ENCODE measurements at regions of chr16 and their contacts with region 1.

Region 1: DNA sequence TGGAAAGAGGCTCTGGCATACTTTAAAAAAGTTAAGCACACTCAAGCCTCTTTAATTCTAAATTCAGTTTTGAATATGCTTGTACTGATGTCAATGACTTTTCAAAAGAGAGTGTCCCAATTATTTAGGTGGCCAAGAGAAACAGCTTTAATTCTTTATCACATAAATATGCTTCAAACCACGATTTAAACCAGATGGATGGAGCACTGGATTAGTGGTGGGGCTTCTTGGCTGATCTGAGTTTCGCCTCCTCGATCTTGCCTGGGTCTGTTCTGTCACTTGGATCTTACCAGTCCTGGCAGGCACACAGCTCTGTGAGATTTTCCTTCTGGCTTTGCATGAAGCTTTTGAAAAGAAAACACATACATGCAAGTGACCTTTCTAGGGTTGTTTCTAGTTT is 467.8 kb downstream of the MAF start:
- DNase-seq: no peak
- H3K4me3 ChIP-seq: no peak overlapping the region
- H3K4me3 Mint-ChIP-seq: no peak overlapping the region
- H3K27ac ChIP-seq: no peak overlapping the region
- H3K27ac Mint-ChIP-seq: no peak overlapping the region
- H3K4me1 ChIP-seq: peaks cover 16 to 18% of the 10 kb centered on the region in 2 donors
- H3K4me1 Mint-ChIP-seq: peaks cover 22% of the 10 kb centered on the region
- H3K27me3 ChIP-seq: no peaks in the 10 kb centered on the region
- H3K27me3 Mint-ChIP-seq: peaks cover 0 to 2% (median 0%) of the 10 kb centered on the region in 3 donors
- CTCF ChIP-seq: no peak

Region 2: DNA sequence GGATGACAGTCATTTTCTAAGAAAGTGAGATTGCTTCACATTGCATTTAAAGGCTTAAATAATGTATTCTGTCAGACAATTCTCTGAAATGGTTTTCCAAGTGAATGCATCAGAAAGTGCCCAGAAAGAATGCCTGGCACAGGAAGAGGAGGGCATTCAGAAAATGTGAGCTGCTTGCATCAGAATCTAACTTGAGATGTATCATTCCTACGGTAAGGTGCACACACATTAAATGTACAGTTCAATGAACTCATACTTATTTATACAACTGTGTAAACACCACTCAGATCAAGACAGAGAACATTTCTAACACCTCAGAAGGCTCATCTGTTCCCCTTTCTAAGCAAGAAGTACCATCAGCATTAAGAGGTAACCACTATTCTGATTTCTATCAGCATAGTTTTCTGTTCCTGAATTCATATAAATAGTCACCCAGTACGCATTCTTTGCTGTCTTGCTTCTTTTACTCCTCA is 170.2 kb before region 1 on chr16:
- intact Hi-C with region 1: no loop called
- DNase-seq: no peak
- H3K4me3 ChIP-seq: no peak overlapping the region
- H3K4me3 Mint-ChIP-seq: no peak overlapping the region
- H3K27ac ChIP-seq: no peak overlapping the region
- H3K27ac Mint-ChIP-seq: no peak overlapping the region
- H3K4me1 ChIP-seq: no peaks in the 10 kb centered on the region
- H3K4me1 Mint-ChIP-seq: no peaks in the 10 kb centered on the region
- H3K27me3 ChIP-seq: no peaks in the 10 kb centered on the region
- H3K27me3 Mint-ChIP-seq: peaks cover 0 to 2% (median 0%) of the 10 kb centered on the region in 3 donors
- CTCF ChIP-seq: no peak

Region 3: DNA sequence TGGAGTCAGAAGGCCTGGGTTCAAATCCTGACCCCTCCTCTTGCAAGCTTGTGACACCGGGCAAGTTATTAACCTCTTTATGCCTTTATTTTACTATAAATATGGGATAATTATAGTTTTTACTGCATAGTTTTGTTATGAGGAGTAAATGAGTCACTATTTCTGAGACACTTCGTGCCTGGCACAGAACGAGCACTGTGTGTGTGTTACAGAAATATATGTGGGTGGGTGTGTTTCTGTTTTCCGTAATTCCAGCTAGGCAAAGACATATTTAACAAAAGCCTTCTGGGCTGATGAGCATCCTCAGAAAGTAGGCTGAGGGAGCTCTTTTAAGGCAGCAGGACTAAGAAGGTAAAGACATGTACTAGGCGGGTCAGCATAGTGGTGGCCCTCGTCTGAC is 49.9 kb after region 1 on chr16:
- intact Hi-C with region 1: loop called in 1 of 2 experiments (anchors 10 kb)
- DNase-seq: no peak
- H3K4me3 ChIP-seq: no peak overlapping the region
- H3K4me3 Mint-ChIP-seq: no peak overlapping the region
- H3K27ac ChIP-seq: no peak overlapping the region
- H3K27ac Mint-ChIP-seq: no peak overlapping the region
- H3K4me1 ChIP-seq: no peaks in the 10 kb centered on the region
- H3K4me1 Mint-ChIP-seq: no peaks in the 10 kb centered on the region
- H3K27me3 ChIP-seq: no peaks in the 10 kb centered on the region
- H3K27me3 Mint-ChIP-seq: peaks cover 2 to 5% (median 4%) of the 10 kb centered on the region in 3 donors
- CTCF ChIP-seq: no peak

Measured in CD14-positive monocyte (primary cell).